PC-9 (cell line): ENCODE measurements at regions of chr11 and their contacts with region 1.

Region 1: GRCh38 chr11:131033151-131033685 is 116.9 kb upstream of the SNX19 start:
- DNase-seq: peak; percentile 89 to 92
- H3K4me3 ChIP-seq: no peak overlapping the region; the same call in 1 of the 2 replicates
- H3K27ac ChIP-seq: peak overlapping the region; percentile 90
- H3K4me1 ChIP-seq: peaks cover 25% of the 10 kb centered on the region
- H3K27me3 ChIP-seq: no peaks in the 10 kb centered on the region
- CTCF ChIP-seq: no peak

Region 2: GRCh38 chr11:129973068-129973467 is 1060.2 kb before region 1 on chr11:
- CTCF ChIA-PET with region 1: no interaction called
- POLR2A ChIA-PET with region 1: no interaction called
- intact Hi-C with region 1: no loop called
- DNase-seq: no peak
- H3K4me3 ChIP-seq: no peak overlapping the region
- H3K27ac ChIP-seq: no peak overlapping the region
- H3K4me1 ChIP-seq: no peaks in the 10 kb centered on the region
- H3K27me3 ChIP-seq: no peaks in the 10 kb centered on the region
- CTCF ChIP-seq: no peak

Region 3: DNA sequence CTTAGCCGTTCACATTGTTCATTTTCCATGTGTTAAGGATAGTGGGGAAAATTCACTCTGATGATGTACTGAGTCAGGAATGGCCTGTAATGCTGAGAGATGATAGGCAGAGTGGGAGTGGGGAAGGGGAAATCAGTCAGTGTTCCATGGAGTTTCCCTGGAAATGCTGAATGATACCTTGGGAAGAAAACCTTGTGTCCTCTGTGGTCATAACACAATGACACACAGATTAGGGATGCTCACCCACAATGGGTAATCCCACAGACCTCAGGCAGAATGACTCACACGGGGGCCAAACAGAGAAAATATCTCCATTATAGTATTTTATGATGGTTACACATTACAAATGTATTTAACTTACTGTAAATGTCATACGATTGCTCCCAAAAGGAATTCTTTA is 234.9 kb before region 1 on chr11:
- CTCF ChIA-PET with region 1: no interaction called
- POLR2A ChIA-PET with region 1: no interaction called
- intact Hi-C with region 1: no loop called
- DNase-seq: no peak
- H3K4me3 ChIP-seq: no peak overlapping the region
- H3K27ac ChIP-seq: no peak overlapping the region
- H3K4me1 ChIP-seq: no peaks in the 10 kb centered on the region
- H3K27me3 ChIP-seq: no peaks in the 10 kb centered on the region
- CTCF ChIP-seq: no peak

Region 4: DNA sequence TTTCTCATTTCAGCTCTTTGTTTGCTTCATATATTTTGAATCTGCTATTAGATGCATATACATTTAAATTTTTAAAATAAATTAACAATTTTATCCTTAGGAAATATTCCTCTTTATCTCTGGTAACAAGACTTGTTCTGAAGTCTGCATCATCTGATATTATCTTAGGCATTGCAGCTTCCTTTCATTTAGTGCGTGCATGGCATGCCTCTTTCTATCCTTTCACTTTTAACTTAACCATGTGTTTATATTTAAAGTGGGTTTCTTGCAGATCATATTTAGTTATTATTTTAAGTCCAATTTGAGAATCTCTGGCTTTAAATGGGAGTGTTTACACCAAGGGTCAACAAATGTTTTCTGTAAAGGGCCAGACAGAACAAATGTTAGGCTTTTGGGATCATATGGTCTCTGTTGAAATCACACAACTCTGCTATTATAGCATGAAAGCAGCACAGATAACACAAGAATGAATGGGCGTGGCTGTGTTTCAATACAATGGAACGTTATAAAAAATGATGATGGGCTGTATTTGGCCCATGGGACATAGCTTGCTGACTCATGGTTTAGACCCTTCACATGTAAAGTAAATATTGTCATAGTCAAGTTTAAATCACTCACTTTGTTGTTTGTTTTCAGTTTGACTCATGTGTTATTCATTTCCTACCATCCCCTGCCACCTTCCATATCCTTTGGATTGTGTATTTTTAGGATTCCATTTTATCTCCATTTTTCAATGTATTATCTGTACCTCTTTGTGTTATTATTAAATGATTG is 33.0 kb before region 1 on chr11:
- CTCF ChIA-PET with region 1: no interaction called
- POLR2A ChIA-PET with region 1: no interaction called
- intact Hi-C with region 1: loop called (anchors 1 kb)
- DNase-seq: peak; percentile 21 to 89
- H3K4me3 ChIP-seq: no peak overlapping the region
- H3K27ac ChIP-seq: peak overlapping the region; percentile 57
- H3K4me1 ChIP-seq: peaks cover 26% of the 10 kb centered on the region
- H3K27me3 ChIP-seq: no peaks in the 10 kb centered on the region
- CTCF ChIP-seq: no peak

Region 5: GRCh38 chr11:131423715-131424114 is 390.5 kb after region 1 on chr11:
- CTCF ChIA-PET with region 1: no interaction called
- POLR2A ChIA-PET with region 1: no interaction called
- intact Hi-C with region 1: loop called (anchors 1 kb)
- DNase-seq: peak; percentile 65 to 77
- H3K4me3 ChIP-seq: no peak overlapping the region
- H3K27ac ChIP-seq: no peak overlapping the region
- H3K4me1 ChIP-seq: no peaks in the 10 kb centered on the region
- H3K27me3 ChIP-seq: no peaks in the 10 kb centered on the region
- CTCF ChIP-seq: no peak